Cardiac septum (tissue), 1 donor: ENCODE measurements at regions of chr20 and their contacts with region 1.

Region 1: DNA sequence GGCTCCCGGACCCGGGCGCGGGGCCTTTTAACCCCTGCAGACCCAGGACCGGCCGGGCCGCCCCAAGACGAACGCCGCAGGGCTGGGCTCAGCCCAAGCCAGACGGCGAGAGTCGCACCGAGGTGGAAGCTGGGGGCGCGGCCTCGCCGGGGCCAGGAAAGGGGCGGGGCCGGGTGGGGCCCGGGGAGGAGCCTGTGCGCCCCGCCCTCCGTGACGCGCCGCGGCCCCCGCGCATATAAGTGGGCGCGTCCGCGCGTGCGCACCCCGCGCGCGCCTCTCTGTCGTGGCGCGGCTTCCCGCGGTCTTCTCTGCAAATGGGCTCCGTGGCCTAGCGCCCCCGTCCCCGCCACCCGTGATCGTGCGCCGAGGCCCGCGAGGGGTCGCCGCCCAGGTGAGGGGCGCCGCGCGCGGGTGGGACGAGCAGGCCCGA is at the start of gene PPDPF:
- DNase-seq: peak; percentile 91
- total RNA-seq, gene PPDPF: 438 TPM

Region 2: DNA sequence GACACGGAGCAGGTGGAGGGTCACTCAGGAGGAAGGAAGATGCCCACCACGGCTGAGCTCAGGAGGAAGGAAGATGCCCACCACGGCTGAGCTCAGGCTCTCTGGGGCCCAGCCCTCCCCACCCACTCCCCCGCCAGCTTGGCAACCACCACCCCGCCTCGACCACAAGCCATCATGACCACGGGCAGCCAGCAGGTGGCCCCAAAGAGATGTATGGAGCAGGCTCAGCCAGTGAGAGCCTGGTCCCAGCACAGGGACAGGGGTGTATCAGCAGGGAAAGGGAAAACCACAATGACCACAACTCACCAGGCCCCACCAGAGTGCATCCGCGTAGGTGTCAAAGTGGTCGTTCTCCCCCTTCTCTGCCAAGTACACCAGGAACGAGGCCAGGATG is 78.4 kb before region 1 on chr20:
- intact Hi-C with region 1: loop called (anchors 5 kb)
- DNase-seq: no peak

Region 3: DNA sequence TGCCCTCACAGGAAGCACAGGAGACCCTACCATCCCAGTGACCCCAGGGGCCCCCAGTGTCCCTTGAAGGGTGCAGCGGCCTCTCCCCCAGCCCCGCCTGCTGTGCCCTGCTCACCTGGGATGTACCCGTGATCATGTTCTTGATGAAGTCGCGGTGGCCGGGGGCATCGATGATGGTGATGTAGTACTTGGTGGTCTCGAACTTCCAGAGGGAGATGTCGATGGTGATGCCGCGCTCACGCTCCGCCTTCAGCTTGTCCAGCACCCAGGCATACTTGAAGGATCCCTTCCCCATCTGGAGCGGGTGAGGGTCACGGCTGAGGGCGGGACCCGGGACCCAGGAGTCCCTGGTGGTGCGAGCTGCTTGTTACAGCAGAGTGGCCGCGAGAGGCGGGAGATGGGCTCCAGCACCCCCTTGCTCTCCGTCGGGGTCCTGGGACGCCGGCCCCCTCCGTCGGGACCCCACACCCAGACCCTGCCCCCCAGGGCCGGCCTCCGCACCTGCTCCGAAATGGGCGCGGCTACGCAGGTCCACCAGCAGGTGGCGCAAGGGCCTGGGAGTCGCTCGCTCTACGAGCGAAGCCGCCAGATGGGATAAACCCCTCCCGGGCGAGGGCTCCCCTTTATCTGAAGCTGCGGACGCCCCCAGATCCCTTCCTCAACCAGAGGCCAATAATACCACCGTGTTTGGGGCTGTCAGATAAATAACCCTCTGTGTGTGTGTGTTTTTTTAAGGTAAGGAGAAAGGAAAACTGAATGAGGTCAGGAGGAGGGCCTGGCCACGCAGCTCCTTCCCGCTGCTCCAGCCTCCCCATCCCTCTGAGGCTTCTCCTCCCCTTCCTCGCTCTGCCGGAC is 24.6 kb before region 1 on chr20:
- intact Hi-C with region 1: loop called (anchors 1 kb)
- DNase-seq: peak; percentile 89